Spleen (tissue), 13 donors: ENCODE measurements at regions of chr6 and their contacts with region 1.

Region 1: DNA sequence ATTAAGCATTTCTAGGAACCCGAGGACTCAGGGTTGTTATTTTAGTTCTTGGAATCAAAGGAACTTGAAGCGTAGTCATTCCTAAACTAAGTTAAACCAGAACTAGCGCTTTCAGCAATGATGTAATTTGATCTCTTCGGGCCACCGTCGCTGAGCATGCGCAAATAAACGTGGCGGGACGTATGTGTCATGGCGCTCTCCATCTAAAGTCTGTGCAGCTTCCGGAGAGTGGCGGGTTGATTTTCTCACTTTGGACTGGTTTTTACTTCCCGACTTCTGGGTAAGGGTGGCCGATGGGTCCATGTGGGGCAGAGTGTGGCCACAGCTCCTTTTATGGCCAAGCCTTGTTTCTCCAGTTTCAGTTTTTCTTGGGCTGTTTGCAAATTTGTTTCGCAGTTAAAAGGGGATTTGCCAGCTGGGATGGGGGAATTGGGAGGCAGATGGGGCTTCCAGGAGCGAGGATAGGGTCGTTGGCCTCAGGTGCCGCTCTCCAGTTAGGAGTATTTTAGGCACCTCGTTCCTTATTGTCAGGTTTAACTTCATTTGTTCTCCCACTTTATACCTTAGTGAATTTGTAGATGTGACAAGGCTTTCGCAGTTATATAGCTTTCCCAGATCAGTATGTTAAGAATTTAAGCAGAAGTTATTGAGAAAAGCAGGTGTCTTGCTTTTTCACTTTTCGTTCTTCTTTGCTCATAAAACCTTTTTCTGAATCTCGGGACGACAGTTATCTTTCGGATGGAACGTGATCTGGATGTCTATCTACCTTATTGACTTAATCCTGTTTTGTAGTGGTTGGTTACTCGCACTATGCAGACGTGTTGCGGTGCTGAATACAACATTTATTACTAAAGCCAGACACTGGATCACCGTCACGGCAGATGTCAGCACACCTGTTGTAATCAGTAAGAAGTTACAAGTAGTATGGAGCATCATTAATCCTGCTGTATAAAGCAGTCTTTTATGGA is at the start of gene CDKAL1:
- DNase-seq: peak; percentile 92
- H3K4me3 ChIP-seq: peak within 1 kb of the TSS; percentile 64 to 92 (median 87)
- H3K27ac ChIP-seq: peak within 1 kb of the TSS; percentile 66 to 91 (median 89)
- H3K4me1 ChIP-seq: peaks cover 7 to 58% (median 35%) of the 10 kb centered on the region in 6 donors
- H3K27me3 ChIP-seq: peaks cover 0 to 7% (median 0%) of the 10 kb centered on the region in 7 donors
- CTCF ChIP-seq: peak in 1 of 11 experiments; percentile 17
- POLR2A ChIP-seq: no peak
- total RNA-seq, gene CDKAL1: 16.7 to 26.9 (median 22.3) TPM

Region 2: GRCh38 chr6:20109526-20109925 is 425.1 kb before region 1 on chr6:
- intact Hi-C with region 1: loop called (anchors 10 kb)
- DNase-seq: no peak
- H3K4me3 ChIP-seq: no peak overlapping the region
- H3K27ac ChIP-seq: no peak overlapping the region
- H3K4me1 ChIP-seq: no peaks in the 10 kb centered on the region
- H3K27me3 ChIP-seq: no peaks in the 10 kb centered on the region
- CTCF ChIP-seq: no peak
- POLR2A ChIP-seq: no peak

Region 3: DNA sequence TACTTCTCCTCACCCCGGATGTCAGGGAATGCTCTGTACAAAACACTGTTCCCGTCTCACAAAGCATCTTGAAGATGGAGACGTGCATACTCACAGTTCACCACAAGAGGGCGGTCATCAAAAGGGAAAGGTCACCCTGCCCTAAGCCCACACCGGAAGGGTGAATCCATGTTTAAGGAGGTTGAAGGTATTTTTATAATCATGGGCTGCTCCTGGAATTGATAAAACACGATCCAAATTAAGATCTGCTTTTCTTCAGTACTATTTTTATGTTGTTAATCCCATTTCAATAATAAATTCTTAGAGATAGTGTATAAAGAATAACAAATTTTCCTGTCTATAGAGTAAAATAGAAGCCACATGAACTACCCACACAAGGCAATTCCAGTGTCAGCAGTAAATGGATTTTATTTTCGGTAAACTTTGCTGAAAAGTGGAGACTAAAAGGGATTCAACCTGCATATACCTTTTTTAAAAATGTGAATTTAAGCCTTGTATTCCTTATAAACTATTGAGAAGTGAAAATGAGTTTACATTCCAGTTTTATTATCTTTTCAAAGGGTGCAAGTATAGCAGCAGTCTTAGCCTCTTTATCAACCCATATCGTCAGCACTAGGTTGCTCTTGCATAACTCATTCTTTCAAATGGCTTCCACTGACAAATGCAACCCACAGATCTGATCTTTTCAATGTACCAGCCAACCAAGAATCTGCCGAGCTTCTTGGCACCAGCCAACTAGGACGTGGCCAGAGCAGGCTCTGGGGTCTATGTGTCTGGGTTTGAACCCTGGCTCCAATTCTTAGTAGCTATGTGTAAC is 242.6 kb before region 1 on chr6:
- intact Hi-C with region 1: loop called (anchors 2 kb)
- DNase-seq: peak; percentile 76
- H3K4me3 ChIP-seq: no peak overlapping the region
- H3K27ac ChIP-seq: no peak overlapping the region
- H3K4me1 ChIP-seq: peaks cover 0 to 18% (median 8%) of the 10 kb centered on the region in 6 donors
- H3K27me3 ChIP-seq: no peaks in the 10 kb centered on the region
- CTCF ChIP-seq: peak; percentile 74 to 92 (median 89)
- POLR2A ChIP-seq: no peak

Region 4: GRCh38 chr6:20401205-20402091 is 133.1 kb before region 1 on chr6 and contains the start of gene E2F3:
- intact Hi-C with region 1: loop called (anchors 5 kb)
- DNase-seq: peak; percentile 98
- H3K4me3 ChIP-seq: peak within 1 kb of the TSS; percentile 61 to 95 (median 84)
- H3K27ac ChIP-seq: peak within 1 kb of the TSS; percentile 67 to 98 (median 92)
- H3K4me1 ChIP-seq: peaks cover 0 to 51% (median 28%) of the 10 kb centered on the region in 6 donors
- H3K27me3 ChIP-seq: no peaks in the 10 kb centered on the region
- CTCF ChIP-seq: no peak
- POLR2A ChIP-seq: no peak
- total RNA-seq, gene E2F3: 13.2 to 22.9 (median 16.4) TPM